ENCODE measurements at regions of chr1 and their contacts with region 1.

Region 1: GRCh38 chr1:227416156-227416830 is 98.0 kb upstream of the CDC42BPA start:
- DNase-seq: no peak
- H3K4me3 ChIP-seq: no peak overlapping the region
- CTCF ChIP-seq: no peak

Region 2: GRCh38 chr1:227459326-227459841 is 43.1 kb after region 1 on chr1:
- in situ Hi-C with region 1: loop called (anchors 5 kb)
- DNase-seq: no peak
- H3K4me3 ChIP-seq: no peak overlapping the region
- CTCF ChIP-seq: no peak

Region 3: GRCh38 chr1:228275739-228276421 is 859.6 kb after region 1 on chr1:
- in situ Hi-C with region 1: no loop called
- DNase-seq: peak; percentile 29
- H3K4me3 ChIP-seq: peak overlapping the region; percentile 49
- CTCF ChIP-seq: no peak

Measured in astrocyte of the cerebellum (primary cell).